ENCODE measurements at regions of chr5 and their contacts with region 1.

Region 1: DNA sequence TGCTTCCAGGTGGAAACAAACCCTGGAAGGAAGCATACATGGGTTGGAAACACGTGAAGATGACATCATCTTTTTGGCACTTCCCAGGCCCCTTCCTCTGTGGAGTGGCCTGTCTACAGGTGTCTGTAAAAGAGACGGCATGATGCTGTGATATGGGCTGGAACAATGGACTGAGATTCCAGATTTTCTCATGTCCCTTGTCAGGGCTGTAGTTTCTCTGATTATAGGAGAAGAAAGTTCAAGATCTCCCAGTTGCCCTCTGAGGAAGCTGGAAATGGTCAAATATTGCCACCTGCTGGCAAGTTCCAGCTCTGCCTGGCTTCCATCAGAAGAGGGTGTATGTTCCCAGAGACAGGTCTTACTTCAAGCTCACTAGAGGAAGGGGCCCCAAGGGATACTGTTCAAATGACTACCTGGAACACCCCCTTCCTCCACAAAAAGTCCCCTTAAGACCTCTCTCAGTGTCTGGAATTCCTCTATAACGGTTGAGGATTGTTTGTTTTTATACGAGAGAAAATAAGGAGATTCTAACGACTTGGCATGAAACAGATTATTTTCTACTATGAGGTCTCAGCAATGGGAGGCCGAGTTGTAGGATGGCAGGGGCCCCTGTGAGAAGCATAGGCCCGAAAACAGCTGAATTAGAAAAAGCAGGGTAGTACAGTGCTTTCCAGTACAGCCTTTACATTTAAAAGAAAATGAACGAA is 7.3 kb upstream of the ANXA6 start:
- DNase-seq: peak; percentile 73 to 81
- ATAC-seq: peak; percentile 88 to 97 (median 90)
- H3K4me3 ChIP-seq: no peak overlapping the region
- H3K27ac ChIP-seq: peak overlapping the region; percentile 47
- H3K4me1 ChIP-seq: peaks cover 14% of the 10 kb centered on the region
- H3K27me3 ChIP-seq: no peaks in the 10 kb centered on the region
- CTCF ChIP-seq: peak; percentile 93

Region 2: DNA sequence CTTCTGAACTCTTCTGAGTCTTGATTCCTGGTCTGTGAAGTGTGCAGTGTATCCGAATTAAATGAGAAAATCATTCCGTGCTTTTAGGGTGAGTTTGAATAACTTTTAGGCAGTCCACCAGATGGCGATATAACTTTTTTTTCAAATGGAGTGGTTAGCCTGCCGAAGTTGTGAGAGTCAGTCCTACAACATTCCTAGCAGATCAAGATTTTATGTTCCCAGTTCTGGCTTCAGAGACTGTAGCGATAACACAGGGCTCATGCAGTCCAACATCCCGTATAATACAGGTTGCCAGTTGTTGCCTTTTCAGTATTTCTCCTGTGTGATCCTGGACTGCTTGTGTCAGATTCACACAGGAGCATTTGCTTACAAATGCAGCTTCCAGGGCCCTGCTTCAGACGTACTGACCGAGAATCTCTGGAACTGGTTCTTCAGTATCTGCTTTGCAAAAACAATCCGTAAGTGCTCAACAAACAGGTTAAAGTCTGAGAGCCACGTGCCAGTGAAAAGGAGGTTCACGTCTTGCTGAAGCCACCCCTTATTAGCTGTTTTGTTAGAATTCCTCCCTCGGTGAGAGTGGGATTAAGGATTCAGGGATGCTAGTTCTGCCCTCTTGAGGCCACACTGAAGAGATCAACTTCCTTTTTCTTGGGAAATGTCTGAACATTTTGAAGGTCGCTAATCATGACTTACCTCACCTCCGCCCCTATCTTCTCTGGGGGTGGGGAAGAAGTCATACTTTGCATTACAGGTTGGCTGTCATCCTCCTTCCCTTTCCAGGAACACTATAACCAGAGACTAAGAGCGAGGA is 363.5 kb before region 1 on chr5:
- intact Hi-C with region 1: loop called in 1 of 2 experiments (anchors 5 kb)
- DNase-seq: no peak
- ATAC-seq: peak; percentile 63 to 90 (median 75)
- H3K4me3 ChIP-seq: peak overlapping the region; percentile 46
- H3K27ac ChIP-seq: no peak overlapping the region
- H3K4me1 ChIP-seq: no peaks in the 10 kb centered on the region
- H3K27me3 ChIP-seq: peaks cover 0 to 6% (median 0%) of the 10 kb centered on the region in 3 donors
- CTCF ChIP-seq: peak; percentile 61

Region 3: GRCh38 chr5:151002250-151002649 is 162.6 kb before region 1 on chr5:
- intact Hi-C with region 1: loop called in 1 of 2 experiments (anchors 5 kb)
- DNase-seq: no peak
- ATAC-seq: peak in 3 of 4 donors; percentile 56 to 67 (median 61)
- H3K4me3 ChIP-seq: no peak overlapping the region
- H3K27ac ChIP-seq: no peak overlapping the region
- H3K4me1 ChIP-seq: peaks cover 25% of the 10 kb centered on the region
- H3K27me3 ChIP-seq: no peaks in the 10 kb centered on the region
- CTCF ChIP-seq: peak; percentile 64

Region 4: DNA sequence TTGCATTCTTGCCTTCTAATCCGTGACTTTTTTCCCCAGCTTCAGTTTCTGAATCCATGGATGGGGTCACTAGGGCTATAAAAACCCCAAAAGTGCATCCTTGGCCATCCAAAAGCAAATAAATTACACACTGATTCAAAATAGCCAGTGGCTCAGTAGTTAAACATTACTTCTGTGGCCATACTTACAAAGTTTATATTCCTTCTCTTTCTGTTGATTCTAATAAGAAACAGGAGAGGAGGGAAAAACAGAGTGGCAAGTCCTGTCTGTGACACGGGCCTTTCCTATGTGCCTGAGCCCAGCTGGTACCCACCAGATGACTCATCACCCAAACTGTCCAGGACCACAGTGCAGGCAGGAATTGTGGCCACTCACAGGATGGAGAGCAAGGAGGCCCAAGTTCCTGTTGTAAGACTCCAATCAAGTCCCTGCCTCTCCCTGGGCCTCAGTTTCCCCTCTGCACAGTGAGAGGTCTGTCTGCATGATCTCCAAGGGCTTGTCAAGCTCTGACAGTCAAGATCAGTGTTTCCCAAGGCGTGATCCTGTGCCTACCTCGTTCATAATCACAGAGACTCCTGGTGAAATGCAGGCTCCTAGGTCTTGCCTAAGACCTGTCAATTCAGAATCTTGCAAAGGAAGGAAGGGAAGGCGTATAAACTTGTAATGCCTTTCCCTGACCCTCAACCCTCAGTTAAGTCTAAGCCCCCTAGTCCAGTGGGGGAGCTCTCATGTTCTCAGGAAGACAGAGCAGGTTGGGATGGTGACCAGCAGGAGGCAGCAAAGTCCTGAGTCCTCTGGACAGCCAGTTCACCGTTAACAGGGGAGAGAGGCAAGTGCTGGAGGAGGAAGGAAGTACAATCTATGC is 113.5 kb before region 1 on chr5:
- intact Hi-C with region 1: loop called in 1 of 2 experiments (anchors 5 kb)
- DNase-seq: peak; percentile 82 to 91
- ATAC-seq: peak; percentile 88 to 91 (median 90)
- H3K4me3 ChIP-seq: no peak overlapping the region
- H3K27ac ChIP-seq: peak overlapping the region; percentile 63
- H3K4me1 ChIP-seq: peaks cover 16% of the 10 kb centered on the region
- H3K27me3 ChIP-seq: no peaks in the 10 kb centered on the region
- CTCF ChIP-seq: peak; percentile 88

Region 5: GRCh38 chr5:151126199-151126645 is 38.6 kb before region 1 on chr5:
- intact Hi-C with region 1: loop called (anchors 1 to 2 kb)
- DNase-seq: peak; percentile 83 to 91
- ATAC-seq: peak; percentile 67 to 72 (median 71)
- H3K4me3 ChIP-seq: no peak overlapping the region
- H3K27ac ChIP-seq: peak overlapping the region; percentile 86
- H3K4me1 ChIP-seq: peaks cover 36% of the 10 kb centered on the region
- H3K27me3 ChIP-seq: no peaks in the 10 kb centered on the region
- CTCF ChIP-seq: peak; percentile 90

Measured in psoas muscle (tissue), 8 donors.